ENCODE measurements at regions of chr3 and their contacts with region 1.

Region 1: GRCh38 chr3:124552239-124552638 is 178.0 kb upstream of the UMPS start:
- DNase-seq: no peak
- H3K4me3 ChIP-seq: no peak overlapping the region
- H3K27ac ChIP-seq: no peak overlapping the region
- H3K27me3 ChIP-seq: no peaks in the 10 kb centered on the region
- CTCF ChIP-seq: no peak

Region 2: DNA sequence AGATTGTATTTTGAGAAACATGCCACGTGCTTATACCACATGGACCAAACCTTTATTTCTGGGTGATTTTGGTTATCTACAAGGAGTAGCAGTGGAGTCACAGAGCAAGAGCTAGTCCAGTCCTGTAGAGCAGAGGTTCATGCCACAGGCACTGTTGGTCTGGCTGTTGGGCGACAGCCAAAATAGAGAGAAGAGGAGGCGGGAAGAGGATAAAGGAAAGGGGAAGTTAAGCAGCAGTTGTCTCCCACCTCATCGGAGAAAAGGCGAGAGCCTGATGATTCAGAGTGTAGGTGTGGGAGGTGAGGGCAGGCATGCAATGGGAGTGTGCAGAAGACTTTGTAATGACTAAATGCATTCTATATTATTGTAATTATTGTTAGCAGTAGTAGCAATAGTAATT is 322.8 kb before region 1 on chr3:
- intact Hi-C with region 1: no loop called
- DNase-seq: peak in 2 of 10 donors; percentile 29 to 53
- H3K4me3 ChIP-seq: no peak overlapping the region
- H3K27ac ChIP-seq: no peak overlapping the region
- H3K27me3 ChIP-seq: no peaks in the 10 kb centered on the region
- CTCF ChIP-seq: no peak

Region 3: GRCh38 chr3:124429129-124429815 is 123.0 kb before region 1 on chr3:
- intact Hi-C with region 1: no loop called
- DNase-seq: no peak
- H3K4me3 ChIP-seq: no peak overlapping the region
- H3K27ac ChIP-seq: peak overlapping the region in 32 of 59 donors; percentile 4 to 78 (median 28)
- H3K27me3 ChIP-seq: no peaks in the 10 kb centered on the region
- CTCF ChIP-seq: no peak

Region 4: GRCh38 chr3:124492811-124493210 is 59.4 kb before region 1 on chr3:
- intact Hi-C with region 1: loop called (anchors 2 to 10 kb)
- DNase-seq: peak in 7 of 10 donors; percentile 20 to 74 (median 55)
- H3K4me3 ChIP-seq: no peak overlapping the region
- H3K27ac ChIP-seq: peak overlapping the region in 13 of 59 donors; percentile 1 to 66 (median 28)
- H3K27me3 ChIP-seq: no peaks in the 10 kb centered on the region
- CTCF ChIP-seq: peak in 52 of 56 donors; percentile 20 to 66 (median 50)

Measured in dorsolateral prefrontal cortex (tissue), 120 donors.